ENCODE measurements at regions of chr4 and their contacts with region 1.

Region 1: DNA sequence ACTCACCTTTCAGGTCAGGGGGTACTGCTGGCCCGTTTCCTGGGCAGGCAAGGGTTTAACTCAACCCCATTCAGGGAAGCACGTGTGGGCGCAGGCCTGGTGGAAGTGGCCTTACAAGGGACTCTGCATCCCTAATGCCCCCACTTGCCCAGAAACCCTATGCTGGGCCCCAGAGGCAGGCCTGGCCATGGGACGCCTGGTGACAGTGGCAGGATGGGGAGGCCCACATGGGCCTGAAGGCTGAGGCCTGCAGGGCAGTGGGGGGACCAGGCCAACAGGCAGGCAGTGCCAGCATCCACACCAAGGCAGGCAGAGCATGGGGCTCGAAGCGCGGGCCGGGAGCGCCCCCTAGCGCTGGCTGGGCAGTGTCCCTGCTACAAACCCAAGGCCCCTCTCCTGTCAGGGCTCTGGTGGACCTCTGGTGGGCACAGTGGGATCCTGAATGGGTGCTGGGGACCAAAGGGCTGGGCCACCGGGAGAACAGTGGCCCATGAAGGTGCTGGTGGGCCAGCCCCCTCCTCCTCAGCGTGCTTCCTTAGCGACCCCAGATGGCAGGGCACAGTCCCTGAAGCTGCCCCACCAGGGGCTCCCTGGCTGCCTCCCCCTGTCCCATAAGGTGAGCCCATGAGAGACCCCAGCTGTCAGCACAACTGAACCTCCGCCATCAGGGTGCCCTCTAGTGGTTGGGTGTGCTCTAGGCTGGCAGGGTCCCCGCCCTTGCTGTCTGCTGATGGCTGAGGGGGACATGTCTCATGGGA is 16.8 kb downstream of the FGFR3 start:
- DNase-seq: peak; percentile 76 to 88 (median 85)
- H3K4me3 ChIP-seq: no peak overlapping the region
- H3K27ac ChIP-seq: no peak overlapping the region
- H3K4me1 ChIP-seq: no peaks in the 10 kb centered on the region
- H3K27me3 ChIP-seq: no peaks in the 10 kb centered on the region

Region 2: DNA sequence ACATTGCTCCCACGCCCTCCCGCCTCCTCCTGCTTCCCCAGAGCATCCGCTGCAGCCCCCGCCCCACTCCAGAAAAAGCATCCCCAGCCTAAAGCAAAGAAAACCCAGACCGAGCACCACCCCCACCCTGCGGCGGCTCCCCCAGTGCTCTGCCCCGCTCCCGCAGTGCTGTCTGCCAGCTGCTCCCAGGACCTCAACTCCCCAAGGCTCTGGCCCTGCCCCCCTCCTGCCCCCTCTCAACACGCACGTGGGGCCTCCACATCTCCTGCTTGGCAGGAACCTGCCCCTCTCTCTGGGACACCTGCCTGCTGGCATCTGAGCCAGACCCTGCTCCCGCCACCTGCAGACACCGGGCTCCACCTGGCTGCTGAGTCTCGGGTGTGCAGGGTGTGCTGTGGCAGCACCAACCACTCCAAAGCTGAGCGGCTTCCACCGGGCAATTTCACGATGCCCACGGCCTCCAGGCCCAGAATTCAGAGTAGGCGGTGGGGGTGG is 205.2 kb before region 1 on chr4:
- CTCF ChIA-PET with region 1: no interaction called
- POLR2A ChIA-PET with region 1: no interaction called
- DNase-seq: peak in 1 of 3 donors; percentile 34
- H3K4me3 ChIP-seq: no peak overlapping the region
- H3K27ac ChIP-seq: no peak overlapping the region
- H3K4me1 ChIP-seq: peaks cover 0 to 2% (median 0%) of the 10 kb centered on the region in 4 experiments
- H3K27me3 ChIP-seq: peaks cover 0 to 15% (median 0%) of the 10 kb centered on the region in 5 experiments

Region 3: DNA sequence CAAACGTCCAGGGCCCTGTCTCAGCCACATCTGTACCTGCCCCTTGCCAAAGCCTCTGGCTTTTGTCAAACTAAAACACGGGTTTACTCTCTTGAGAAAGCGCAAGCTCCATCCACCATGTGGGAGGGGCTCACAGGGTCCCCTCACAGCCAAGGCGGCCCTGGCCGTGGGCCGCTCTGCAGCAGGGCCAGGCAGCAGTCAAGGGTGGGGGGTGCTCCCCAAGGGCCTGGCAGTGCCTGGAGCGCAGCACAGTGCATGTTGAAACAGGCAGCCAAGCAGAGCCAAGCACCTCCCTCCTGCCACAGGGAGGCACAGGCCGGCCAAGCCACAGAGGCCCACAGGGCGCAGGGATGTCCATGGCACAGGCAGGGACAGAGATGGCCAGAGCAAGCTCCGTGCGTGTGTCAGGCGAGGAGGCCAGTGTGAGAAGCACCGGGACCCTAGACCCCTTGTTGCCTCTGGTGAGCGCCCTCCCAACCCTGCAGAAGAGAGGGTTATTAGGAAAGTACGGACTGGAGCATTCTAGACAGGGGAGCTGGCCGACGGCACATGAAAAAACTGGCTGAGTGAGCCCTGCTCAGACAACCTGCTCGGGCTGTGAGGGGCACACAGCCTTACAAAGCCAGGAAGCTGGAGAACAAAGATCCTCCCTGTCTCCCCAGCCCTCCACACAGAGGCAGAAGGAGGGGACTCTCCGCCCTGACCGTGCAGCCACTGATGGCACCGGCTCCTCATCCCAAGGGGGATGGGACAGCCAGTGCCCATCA is 164.9 kb before region 1 on chr4:
- CTCF ChIA-PET with region 1: no interaction called
- POLR2A ChIA-PET with region 1: no interaction called
- DNase-seq: no peak
- H3K4me3 ChIP-seq: no peak overlapping the region
- H3K27ac ChIP-seq: no peak overlapping the region
- H3K4me1 ChIP-seq: peaks cover 0 to 2% (median under 1%) of the 10 kb centered on the region in 4 experiments
- H3K27me3 ChIP-seq: no peaks in the 10 kb centered on the region

Region 4: DNA sequence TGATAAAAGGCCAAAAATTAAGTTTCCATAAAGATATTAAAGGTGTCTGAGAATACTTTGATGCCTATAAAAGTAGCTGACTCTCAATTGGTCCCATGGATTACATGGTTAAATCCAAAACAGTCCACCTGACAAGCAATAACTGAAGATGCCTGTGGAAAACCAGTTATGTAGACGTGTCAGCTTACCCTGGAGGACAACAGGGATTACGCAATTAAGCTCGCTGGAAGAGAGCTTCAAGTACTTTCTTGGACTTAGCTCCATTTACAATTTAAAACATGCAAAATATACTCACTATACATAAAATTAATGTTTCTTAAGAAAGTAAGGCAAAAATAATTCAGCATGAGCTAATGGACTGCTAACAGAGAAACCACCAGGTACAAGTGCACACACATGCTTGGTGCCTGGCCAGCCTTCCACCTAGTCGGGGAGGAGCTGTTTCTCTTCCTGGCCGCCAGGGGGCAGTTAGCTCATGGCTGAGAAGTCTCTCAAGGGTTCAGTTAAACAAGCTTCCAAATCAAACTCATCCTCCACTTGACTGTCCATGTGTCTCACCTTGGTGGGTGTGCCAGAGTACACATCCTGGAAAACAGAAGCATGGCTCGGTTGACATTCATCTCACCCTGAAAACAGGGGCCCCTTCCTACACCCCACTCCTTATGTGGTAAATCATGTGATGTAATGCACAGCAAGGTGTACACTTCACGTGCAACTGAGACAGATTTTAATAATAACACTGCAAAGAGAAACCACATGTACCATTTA is 116.6 kb before region 1 on chr4:
- CTCF ChIA-PET with region 1: interaction called, 10 read pairs
- POLR2A ChIA-PET with region 1: no interaction called
- DNase-seq: peak; percentile 80 to 91 (median 91)
- H3K4me3 ChIP-seq: no peak overlapping the region
- H3K27ac ChIP-seq: no peak overlapping the region
- H3K4me1 ChIP-seq: no peaks in the 10 kb centered on the region
- H3K27me3 ChIP-seq: no peaks in the 10 kb centered on the region

Region 5: DNA sequence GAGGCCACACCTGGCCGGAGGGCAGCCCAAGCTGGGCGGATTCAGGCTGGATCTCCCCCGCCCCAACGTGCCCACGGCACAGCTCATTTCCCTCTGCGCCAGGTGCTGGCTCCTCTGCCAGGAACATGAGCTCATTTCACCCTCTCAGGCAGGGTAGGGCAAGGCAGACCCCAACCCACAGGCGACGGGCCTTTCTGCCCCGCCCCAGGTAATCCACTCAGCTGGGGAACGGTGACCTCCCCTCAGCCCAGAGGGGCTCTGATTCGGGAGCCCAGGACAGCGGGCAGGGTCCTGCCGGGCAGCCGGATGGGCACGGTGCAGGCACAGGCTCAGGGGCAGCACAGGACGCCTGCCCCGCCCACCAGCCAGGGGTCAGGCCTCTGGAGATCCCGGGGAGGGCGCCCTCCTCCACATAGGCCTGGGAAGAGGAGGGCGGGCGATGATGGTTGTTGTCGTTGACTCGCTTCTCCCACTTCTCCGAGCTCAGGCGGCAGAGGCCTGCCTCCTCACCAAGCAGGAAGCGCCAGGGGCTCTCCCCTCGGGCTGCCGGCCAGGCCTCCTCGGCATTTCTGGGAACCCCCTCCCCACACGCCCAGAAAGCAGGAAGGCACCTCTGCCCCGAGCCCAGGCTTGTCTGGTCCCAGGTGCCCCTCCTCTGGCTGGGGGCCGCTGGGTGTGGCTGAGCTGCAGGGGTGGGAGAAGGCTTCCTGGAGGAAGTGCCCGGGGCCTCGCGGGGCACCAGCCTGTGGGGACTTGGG is 57.5 kb before region 1 on chr4:
- CTCF ChIA-PET with region 1: interaction called, 168 read pairs
- POLR2A ChIA-PET with region 1: no interaction called
- DNase-seq: peak in 2 of 3 donors; percentile 64 to 66
- H3K4me3 ChIP-seq: peak overlapping the region in 4 of 7 experiments; percentile 25 to 62 (median 40)
- H3K27ac ChIP-seq: no peak overlapping the region
- H3K4me1 ChIP-seq: peaks cover 0 to 66% (median 59%) of the 10 kb centered on the region in 4 experiments
- H3K27me3 ChIP-seq: no peaks in the 10 kb centered on the region

Region 6: DNA sequence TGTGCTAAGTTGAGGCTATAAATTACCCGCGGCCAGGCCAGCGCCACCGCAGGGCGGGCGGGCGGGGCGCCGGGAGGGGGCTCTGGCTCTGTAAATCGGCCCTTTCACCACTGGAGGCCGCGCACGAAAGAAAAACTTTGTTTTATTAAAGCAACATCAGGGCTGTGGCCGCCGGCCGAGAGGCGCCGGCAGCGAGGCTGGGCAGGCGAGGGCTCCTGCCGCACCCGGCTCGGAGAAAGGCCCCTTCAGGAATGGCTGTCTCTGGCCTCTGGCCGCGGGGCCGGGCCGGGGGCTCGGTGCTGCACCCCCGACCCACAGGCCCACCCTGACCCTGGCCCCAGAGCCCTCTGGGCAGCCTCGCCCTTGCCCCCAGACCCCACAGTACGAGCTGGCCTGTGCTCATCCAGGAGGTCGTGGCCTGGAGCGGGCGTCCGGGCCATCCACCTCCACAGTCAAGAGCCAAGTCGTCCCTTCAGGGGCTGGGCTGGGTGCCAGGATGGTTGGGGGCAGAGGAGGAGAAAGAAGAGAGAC is 46.3 kb before region 1 on chr4:
- CTCF ChIA-PET with region 1: interaction called, 18 read pairs
- POLR2A ChIA-PET with region 1: no interaction called
- DNase-seq: peak; percentile 39 to 64 (median 61)
- H3K4me3 ChIP-seq: peak overlapping the region in 3 of 7 experiments; percentile 46 to 54 (median 48)
- H3K27ac ChIP-seq: no peak overlapping the region
- H3K4me1 ChIP-seq: peaks cover 0 to 38% (median 31%) of the 10 kb centered on the region in 4 experiments
- H3K27me3 ChIP-seq: peaks cover 0 to 12% (median 0%) of the 10 kb centered on the region in 5 experiments

Region 7: DNA sequence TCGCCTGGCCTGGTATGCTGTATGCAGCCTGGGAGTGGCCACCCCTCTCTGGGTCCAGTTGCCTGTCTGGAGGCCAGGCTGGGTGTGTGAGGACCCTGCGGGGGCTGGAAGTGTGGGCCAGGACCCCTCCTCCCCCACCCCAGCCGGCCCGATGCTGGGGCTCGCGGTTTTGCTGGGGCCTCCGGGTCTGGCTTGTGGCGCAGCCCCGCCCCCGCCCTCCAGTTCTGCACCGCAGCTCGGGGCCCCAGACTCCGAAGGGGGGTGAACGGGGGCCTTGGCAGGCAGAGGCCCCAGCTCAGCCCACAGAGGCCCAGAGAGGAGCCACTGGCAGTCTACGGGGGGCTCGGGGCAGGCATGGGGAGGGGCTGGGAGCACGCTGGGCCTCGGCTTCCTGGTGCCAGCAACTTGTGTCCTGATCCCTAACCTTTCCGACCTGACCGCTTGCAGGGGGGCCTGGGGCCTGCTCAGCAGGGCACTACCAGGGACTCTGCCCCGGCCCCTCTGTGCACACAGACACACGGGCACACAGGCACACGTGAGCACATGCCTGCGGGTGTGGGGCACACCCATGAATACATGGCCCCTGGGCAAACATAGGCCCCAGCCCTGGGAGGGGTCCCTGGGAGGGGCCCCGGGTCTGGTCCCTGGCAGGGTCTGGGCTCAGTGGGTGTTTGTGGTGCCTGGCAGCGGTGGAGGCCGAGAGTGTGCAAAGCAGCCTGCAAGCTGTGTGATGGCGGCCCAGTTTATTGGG is 38.2 kb before region 1 on chr4:
- CTCF ChIA-PET with region 1: interaction called, 13 read pairs
- POLR2A ChIA-PET with region 1: no interaction called
- DNase-seq: peak in 2 of 3 donors; percentile 81 to 86
- H3K4me3 ChIP-seq: peak overlapping the region in 3 of 7 experiments; percentile 25 to 26 (median 25)
- H3K27ac ChIP-seq: no peak overlapping the region
- H3K4me1 ChIP-seq: peaks cover 0 to 70% (median 65%) of the 10 kb centered on the region in 4 experiments
- H3K27me3 ChIP-seq: peaks cover 0 to 9% (median 0%) of the 10 kb centered on the region in 5 experiments

Region 8: GRCh38 chr4:1792832-1793495 is 17.0 kb before region 1 on chr4 and contains the start of gene FGFR3:
- CTCF ChIA-PET with region 1: interaction called, 25 read pairs
- POLR2A ChIA-PET with region 1: no interaction called
- DNase-seq: peak in 2 of 3 donors; percentile 54 to 61
- H3K4me3 ChIP-seq: peak within 1 kb of the TSS; percentile 12 to 71 (median 54)
- H3K27ac ChIP-seq: no peak within 1 kb of the TSS
- H3K4me1 ChIP-seq: peaks cover 0 to 24% (median 20%) of the 10 kb centered on the region in 4 experiments
- H3K27me3 ChIP-seq: peaks cover 0 to 48% (median 14%) of the 10 kb centered on the region in 5 experiments

Region 9: GRCh38 chr4:1928356-1929239 is 118.7 kb after region 1 on chr4:
- CTCF ChIA-PET with region 1: no interaction called
- POLR2A ChIA-PET with region 1: no interaction called
- DNase-seq: peak in 2 of 3 donors; percentile 19 to 22
- H3K4me3 ChIP-seq: no peak overlapping the region
- H3K27ac ChIP-seq: no peak overlapping the region
- H3K4me1 ChIP-seq: peaks cover 0 to 3% (median 0%) of the 10 kb centered on the region in 4 experiments
- H3K27me3 ChIP-seq: no peaks in the 10 kb centered on the region

Region 10: GRCh38 chr4:1939664-1940509 is 130.0 kb after region 1 on chr4:
- CTCF ChIA-PET with region 1: no interaction called
- POLR2A ChIA-PET with region 1: no interaction called
- DNase-seq: no peak
- H3K4me3 ChIP-seq: no peak overlapping the region
- H3K27ac ChIP-seq: no peak overlapping the region
- H3K4me1 ChIP-seq: no peaks in the 10 kb centered on the region
- H3K27me3 ChIP-seq: no peaks in the 10 kb centered on the region

Measured in common myeloid progenitor, CD34-positive (primary cell).